ENCODE measurements at regions of chrX and their contacts with region 1.

Region 1: DNA sequence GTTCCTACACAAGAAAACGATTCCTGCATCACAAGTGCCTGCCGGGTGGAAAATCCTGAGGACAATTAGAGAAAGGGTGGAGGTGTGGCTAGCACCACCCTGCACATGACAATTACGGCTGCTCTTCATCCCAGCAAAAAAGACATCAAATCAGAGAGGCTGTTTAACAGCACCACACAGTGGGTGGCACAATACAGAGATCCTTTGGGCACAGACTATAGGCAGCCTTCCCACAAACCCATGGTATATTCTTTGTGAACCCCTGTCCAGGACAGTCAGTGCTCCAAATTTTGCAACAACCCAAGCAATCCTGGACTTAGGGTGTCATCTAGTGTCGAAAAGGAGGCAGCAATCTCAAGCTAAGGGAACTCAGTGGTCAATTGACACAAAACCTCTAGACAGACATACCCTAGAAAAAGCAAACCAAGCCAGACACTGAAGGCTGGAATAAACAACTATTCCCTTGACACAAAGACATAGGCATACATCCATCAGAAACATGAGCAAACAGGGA is 137.4 kb downstream of the BMP15 start:
- DNase-seq: peak in 1 of 2 experiments; percentile 15
- H3K4me3 ChIP-seq: no peak overlapping the region
- H3K4me3 Mint-ChIP-seq: no peak overlapping the region
- H3K27ac Mint-ChIP-seq: no peak overlapping the region
- H3K4me1 ChIP-seq: no peaks in the 10 kb centered on the region
- H3K4me1 Mint-ChIP-seq: no peaks in the 10 kb centered on the region
- H3K27me3 ChIP-seq: no peaks in the 10 kb centered on the region
- H3K27me3 Mint-ChIP-seq: peaks cover 4% of the 10 kb centered on the region
- CTCF ChIP-seq: peak; percentile 31 to 50

Region 2: DNA sequence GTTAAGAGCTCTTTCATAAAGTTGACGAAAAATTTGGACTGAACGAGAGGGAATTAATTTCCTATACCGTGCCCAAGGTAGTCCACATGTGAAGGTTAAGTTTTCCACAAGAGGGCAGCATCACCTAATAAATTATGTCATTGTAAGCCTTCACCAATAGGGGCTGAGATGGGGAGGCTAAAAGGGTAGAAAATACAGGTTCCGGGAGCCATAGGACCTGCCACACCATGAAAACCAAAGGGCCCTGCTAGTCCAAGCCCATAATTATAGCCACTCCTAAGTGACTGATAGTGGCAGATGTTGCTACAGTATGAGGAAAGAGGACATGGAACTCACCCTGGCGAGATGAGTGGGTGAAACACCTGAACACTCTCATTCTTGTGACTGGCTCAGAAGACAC is 356.1 kb before region 1 on chrX:
- CTCF ChIA-PET with region 1: no interaction called
- POLR2A ChIA-PET with region 1: no interaction called
- intact Hi-C with region 1: loop called (anchors 1 kb)
- DNase-seq: peak in 1 of 2 experiments; percentile 53
- H3K4me3 ChIP-seq: no peak overlapping the region
- H3K4me3 Mint-ChIP-seq: no peak overlapping the region
- H3K27ac Mint-ChIP-seq: no peak overlapping the region
- H3K4me1 ChIP-seq: no peaks in the 10 kb centered on the region
- H3K4me1 Mint-ChIP-seq: no peaks in the 10 kb centered on the region
- H3K27me3 ChIP-seq: no peaks in the 10 kb centered on the region
- H3K27me3 Mint-ChIP-seq: peaks cover 2% of the 10 kb centered on the region
- CTCF ChIP-seq: peak; percentile 57 to 63

Region 3: DNA sequence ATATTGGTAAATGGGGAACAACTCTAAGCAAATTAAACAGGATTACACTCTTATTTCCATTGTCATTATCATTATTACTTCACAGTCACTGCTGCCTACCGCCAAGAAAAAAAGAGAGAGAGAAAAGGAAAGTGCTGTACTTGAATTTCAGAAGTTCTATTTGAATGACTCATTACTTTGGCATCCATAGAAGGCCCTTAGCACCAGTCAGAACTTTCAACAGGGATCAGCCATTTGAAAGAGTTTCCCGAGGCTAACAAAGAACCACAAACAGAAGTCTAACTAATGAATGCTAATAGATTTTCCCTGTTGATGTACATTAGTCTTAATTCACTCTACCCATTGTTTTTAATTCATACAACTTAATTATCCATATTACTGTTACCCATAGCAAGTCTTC is 350.2 kb before region 1 on chrX:
- CTCF ChIA-PET with region 1: no interaction called
- POLR2A ChIA-PET with region 1: no interaction called
- intact Hi-C with region 1: loop called (anchors 2 kb)
- DNase-seq: no peak
- H3K4me3 ChIP-seq: no peak overlapping the region
- H3K4me3 Mint-ChIP-seq: no peak overlapping the region
- H3K27ac Mint-ChIP-seq: no peak overlapping the region
- H3K4me1 ChIP-seq: no peaks in the 10 kb centered on the region; the same call in 1 of the 2 replicates
- H3K4me1 Mint-ChIP-seq: peaks cover 12% of the 10 kb centered on the region
- H3K27me3 ChIP-seq: no peaks in the 10 kb centered on the region
- H3K27me3 Mint-ChIP-seq: peaks cover 2% of the 10 kb centered on the region
- CTCF ChIP-seq: no peak

Region 4: GRCh38 chrX:50747471-50747900 is 300.4 kb before region 1 on chrX:
- CTCF ChIA-PET with region 1: interaction called, 3 read pairs
- POLR2A ChIA-PET with region 1: no interaction called
- intact Hi-C with region 1: loop called (anchors 5 kb)
- DNase-seq: peak in 1 of 2 experiments; percentile 25
- H3K4me3 ChIP-seq: no peak overlapping the region
- H3K4me3 Mint-ChIP-seq: no peak overlapping the region
- H3K27ac Mint-ChIP-seq: no peak overlapping the region
- H3K4me1 ChIP-seq: no peaks in the 10 kb centered on the region
- H3K4me1 Mint-ChIP-seq: no peaks in the 10 kb centered on the region
- H3K27me3 ChIP-seq: no peaks in the 10 kb centered on the region
- H3K27me3 Mint-ChIP-seq: peaks cover 8% of the 10 kb centered on the region
- CTCF ChIP-seq: peak; percentile 55 to 65

Region 5: GRCh38 chrX:50905334-50905733 is 142.6 kb before region 1 on chrX:
- CTCF ChIA-PET with region 1: no interaction called
- POLR2A ChIA-PET with region 1: no interaction called
- intact Hi-C with region 1: loop called (anchors 10 kb)
- DNase-seq: peak in 1 of 2 experiments; percentile 32
- H3K4me3 ChIP-seq: no peak overlapping the region
- H3K4me3 Mint-ChIP-seq: no peak overlapping the region
- H3K27ac Mint-ChIP-seq: no peak overlapping the region
- H3K4me1 ChIP-seq: no peaks in the 10 kb centered on the region
- H3K4me1 Mint-ChIP-seq: no peaks in the 10 kb centered on the region
- H3K27me3 ChIP-seq: no peaks in the 10 kb centered on the region
- H3K27me3 Mint-ChIP-seq: no peaks in the 10 kb centered on the region
- CTCF ChIP-seq: peak in 1 of 2 experiments; percentile 25

Region 6: GRCh38 chrX:50988649-50989048 is 59.2 kb before region 1 on chrX:
- CTCF ChIA-PET with region 1: no interaction called
- POLR2A ChIA-PET with region 1: no interaction called
- intact Hi-C with region 1: loop called (anchors 2 kb)
- DNase-seq: peak in 1 of 2 experiments; percentile 33
- H3K4me3 ChIP-seq: no peak overlapping the region
- H3K4me3 Mint-ChIP-seq: no peak overlapping the region
- H3K27ac Mint-ChIP-seq: no peak overlapping the region
- H3K4me1 ChIP-seq: no peaks in the 10 kb centered on the region
- H3K4me1 Mint-ChIP-seq: no peaks in the 10 kb centered on the region
- H3K27me3 ChIP-seq: no peaks in the 10 kb centered on the region
- H3K27me3 Mint-ChIP-seq: peaks cover 3% of the 10 kb centered on the region
- CTCF ChIP-seq: peak in 1 of 2 experiments; percentile 51

Measured in Caco-2 (cell line).